ENCODE measurements at regions of chr1 and their contacts with region 1.

Region 1: DNA sequence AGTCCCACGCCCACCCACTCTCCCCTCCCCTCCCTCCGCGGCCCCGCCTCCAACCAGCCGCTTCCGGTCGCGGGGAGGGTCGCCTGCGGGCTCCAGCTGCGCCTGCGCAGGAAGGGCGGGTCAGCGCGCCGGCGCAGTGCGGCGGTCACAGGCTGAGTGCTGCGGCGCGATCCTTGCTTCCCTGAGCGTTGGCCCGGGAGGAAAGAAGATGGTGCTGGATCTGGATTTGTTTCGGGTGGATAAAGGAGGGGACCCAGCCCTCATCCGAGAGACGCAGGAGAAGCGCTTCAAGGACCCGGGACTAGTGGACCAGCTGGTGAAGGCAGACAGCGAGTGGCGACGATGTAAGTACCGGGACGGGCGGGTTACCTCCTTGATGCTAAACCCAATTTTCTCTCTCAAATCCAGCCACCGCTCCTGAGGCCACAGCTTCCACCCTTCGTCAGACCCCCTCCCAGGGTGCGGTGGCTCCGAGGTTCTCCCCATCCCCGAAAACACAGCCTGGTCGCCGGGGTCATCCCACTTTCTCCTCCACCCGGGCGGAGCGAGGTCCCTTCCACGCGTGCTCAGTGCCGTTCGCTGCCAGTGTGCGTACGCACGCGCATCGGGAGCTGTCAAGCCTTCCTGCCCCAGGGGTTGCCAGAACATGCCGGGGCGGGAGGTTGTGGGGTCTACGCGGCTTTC is at the start of gene SARS1:
- DNase-seq: peak; percentile 96 to 99 (median 99)
- ATAC-seq: peak; percentile 88
- H3K4me3 ChIP-seq: peak within 1 kb of the TSS; percentile 67
- H3K27ac ChIP-seq: peak within 1 kb of the TSS; percentile 80
- H3K4me1 ChIP-seq: peaks cover 15 to 38% of the 10 kb centered on the region in 2 experiments
- H3K27me3 ChIP-seq: no peaks in the 10 kb centered on the region
- CTCF ChIP-seq: no peak; a peak in 1 of 6 replicates
- EP300 ChIP-seq: no peak; the same call in 1 of the 2 replicates
- POLR2A ChIP-seq: peak; percentile 96
- RAD21 ChIP-seq: no peak
- polyA plus RNA-seq, gene SARS1: 336 to 623 TPM

Region 2: GRCh38 chr1:109186733-109187086 is 27.2 kb before region 1 on chr1:
- CTCF ChIA-PET with region 1: no interaction called
- POLR2A ChIA-PET with region 1: interaction called, 13 read pairs
- in situ Hi-C with region 1: no loop called
- intact Hi-C with region 1: no loop called
- DNase-seq: peak in 1 of 4 experiments; percentile 33
- ATAC-seq: peak; percentile 25
- H3K4me3 ChIP-seq: no peak overlapping the region
- H3K27ac ChIP-seq: no peak overlapping the region
- H3K4me1 ChIP-seq: peaks cover 39 to 41% of the 10 kb centered on the region in 2 experiments
- H3K27me3 ChIP-seq: no peaks in the 10 kb centered on the region
- CTCF ChIP-seq: no peak
- EP300 ChIP-seq: no peak
- POLR2A ChIP-seq: no peak
- RAD21 ChIP-seq: no peak

Region 3: GRCh38 chr1:109193653-109194590 is 20.0 kb before region 1 on chr1:
- CTCF ChIA-PET with region 1: no interaction called
- POLR2A ChIA-PET with region 1: interaction called, 15 read pairs
- in situ Hi-C with region 1: no loop called
- intact Hi-C with region 1: no loop called
- DNase-seq: peak; percentile 83 to 87 (median 84)
- ATAC-seq: peak; percentile 69
- H3K4me3 ChIP-seq: no peak overlapping the region
- H3K27ac ChIP-seq: no peak overlapping the region
- H3K4me1 ChIP-seq: peaks cover 19 to 50% of the 10 kb centered on the region in 2 experiments
- H3K27me3 ChIP-seq: no peaks in the 10 kb centered on the region
- CTCF ChIP-seq: peak; percentile 93 to 98 (median 94)
- EP300 ChIP-seq: no peak
- POLR2A ChIP-seq: no peak
- RAD21 ChIP-seq: peak; percentile 86 to 89

Region 4: GRCh38 chr1:109201123-109201703 is 12.7 kb before region 1 on chr1:
- CTCF ChIA-PET with region 1: no interaction called
- POLR2A ChIA-PET with region 1: interaction called, 26 read pairs
- in situ Hi-C with region 1: no loop called
- intact Hi-C with region 1: no loop called
- DNase-seq: peak; percentile 91 to 93 (median 92)
- ATAC-seq: peak; percentile 85
- H3K4me3 ChIP-seq: no peak overlapping the region
- H3K27ac ChIP-seq: no peak overlapping the region
- H3K4me1 ChIP-seq: peaks cover 22 to 39% of the 10 kb centered on the region in 2 experiments
- H3K27me3 ChIP-seq: no peaks in the 10 kb centered on the region
- CTCF ChIP-seq: peak; percentile 87 to 98 (median 97)
- EP300 ChIP-seq: no peak
- POLR2A ChIP-seq: no peak
- RAD21 ChIP-seq: peak; percentile 88 to 92

Region 5: GRCh38 chr1:109226078-109226445 is 12.1 kb after region 1 on chr1:
- CTCF ChIA-PET with region 1: no interaction called
- POLR2A ChIA-PET with region 1: interaction called, 56 read pairs
- in situ Hi-C with region 1: no loop called
- intact Hi-C with region 1: no loop called
- DNase-seq: no peak
- ATAC-seq: no peak
- H3K4me3 ChIP-seq: no peak overlapping the region
- H3K27ac ChIP-seq: no peak overlapping the region
- H3K4me1 ChIP-seq: no peaks in the 10 kb centered on the region
- H3K27me3 ChIP-seq: no peaks in the 10 kb centered on the region
- CTCF ChIP-seq: no peak
- EP300 ChIP-seq: no peak
- POLR2A ChIP-seq: no peak
- RAD21 ChIP-seq: no peak

Region 6: GRCh38 chr1:109239580-109240095 is 25.7 kb after region 1 on chr1:
- CTCF ChIA-PET with region 1: no interaction called
- POLR2A ChIA-PET with region 1: interaction called, 23 read pairs
- in situ Hi-C with region 1: no loop called
- intact Hi-C with region 1: no loop called
- DNase-seq: peak; percentile 72 to 79 (median 78)
- ATAC-seq: peak; percentile 90
- H3K4me3 ChIP-seq: no peak overlapping the region
- H3K27ac ChIP-seq: no peak overlapping the region
- H3K4me1 ChIP-seq: peaks cover 15 to 28% of the 10 kb centered on the region in 2 experiments; a peak in 4 of 5 replicates
- H3K27me3 ChIP-seq: no peaks in the 10 kb centered on the region
- CTCF ChIP-seq: peak; percentile 85 to 91 (median 88)
- EP300 ChIP-seq: no peak
- POLR2A ChIP-seq: peak; percentile 58; the same call in 1 of the 2 replicates
- RAD21 ChIP-seq: peak; percentile 46 to 64

Region 7: DNA sequence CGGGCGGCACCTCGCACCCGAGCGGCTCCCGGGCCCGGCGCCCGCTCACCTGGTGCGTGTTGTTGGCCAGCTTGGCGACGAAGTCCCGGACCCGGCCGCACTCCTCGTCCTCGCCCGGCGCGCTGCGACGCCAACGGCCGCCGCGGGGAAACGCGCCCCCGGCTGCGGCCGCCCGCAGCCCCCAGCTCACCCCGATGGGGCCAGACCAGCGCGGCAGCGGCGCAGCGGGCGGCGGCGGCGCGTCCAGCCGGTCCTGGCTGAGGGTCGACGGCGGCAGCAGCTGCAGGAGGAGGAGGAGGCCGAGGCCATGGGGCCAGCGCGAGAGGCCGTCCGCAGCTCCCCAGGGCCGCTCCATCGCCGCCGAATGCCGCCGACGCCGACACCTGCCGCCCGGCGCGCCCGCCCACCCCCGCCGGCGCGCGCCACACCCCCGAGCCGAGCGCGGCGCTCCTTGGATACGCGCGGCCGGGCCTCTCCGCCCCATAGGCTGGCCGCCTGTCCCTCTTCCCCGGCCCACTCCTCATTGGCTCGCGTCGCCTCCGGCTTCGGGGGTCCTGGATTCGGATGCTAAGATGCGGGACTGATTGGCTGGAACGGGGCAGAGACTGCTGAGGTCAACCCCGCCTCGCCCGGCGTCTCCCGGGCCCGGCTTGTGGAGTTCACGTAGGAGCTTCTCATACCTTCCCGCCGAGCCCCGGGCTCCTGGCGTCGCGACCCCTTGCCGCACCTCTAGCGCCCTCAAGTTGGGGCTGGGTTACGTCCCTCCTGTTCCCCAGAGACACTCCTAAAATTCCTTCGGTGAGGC is 183.8 kb after region 1 on chr1 and contains the start of gene SORT1:
- CTCF ChIA-PET with region 1: no interaction called
- POLR2A ChIA-PET with region 1: interaction called, 16 read pairs
- in situ Hi-C with region 1: no loop called
- intact Hi-C with region 1: no loop called
- DNase-seq: peak; percentile 93 to 96 (median 94)
- ATAC-seq: peak; percentile 88
- H3K4me3 ChIP-seq: peak within 1 kb of the TSS; percentile 55
- H3K27ac ChIP-seq: peak within 1 kb of the TSS; percentile 51
- H3K4me1 ChIP-seq: peaks cover 29 to 34% of the 10 kb centered on the region in 2 experiments
- H3K27me3 ChIP-seq: no peaks in the 10 kb centered on the region
- CTCF ChIP-seq: peak in 2 of 3 experiments; percentile 37 to 60; a peak in 4 of 6 replicates
- EP300 ChIP-seq: no peak
- POLR2A ChIP-seq: no peak
- RAD21 ChIP-seq: peak; percentile 56 to 81
- polyA plus RNA-seq, gene SORT1: 27.4 to 33.3 TPM